Activated naive CD4-positive, alpha-beta T cell treated with anti-CD3 and anti-CD28 coated beads for 36 hours (primary cell): ENCODE measurements at regions of chr2 and their contacts with region 1.

Region 1: GRCh38 chr2:109128048-109128465 is 948 bp upstream of the SH3RF3 start:
- DNase-seq: peak; percentile 81
- H3K4me3 Mint-ChIP-seq: peak overlapping the region; percentile 76
- H3K27ac Mint-ChIP-seq: no peak overlapping the region
- H3K4me1 Mint-ChIP-seq: peaks cover 42% of the 10 kb centered on the region
- H3K27me3 Mint-ChIP-seq: peaks cover 6% of the 10 kb centered on the region

Region 2: DNA sequence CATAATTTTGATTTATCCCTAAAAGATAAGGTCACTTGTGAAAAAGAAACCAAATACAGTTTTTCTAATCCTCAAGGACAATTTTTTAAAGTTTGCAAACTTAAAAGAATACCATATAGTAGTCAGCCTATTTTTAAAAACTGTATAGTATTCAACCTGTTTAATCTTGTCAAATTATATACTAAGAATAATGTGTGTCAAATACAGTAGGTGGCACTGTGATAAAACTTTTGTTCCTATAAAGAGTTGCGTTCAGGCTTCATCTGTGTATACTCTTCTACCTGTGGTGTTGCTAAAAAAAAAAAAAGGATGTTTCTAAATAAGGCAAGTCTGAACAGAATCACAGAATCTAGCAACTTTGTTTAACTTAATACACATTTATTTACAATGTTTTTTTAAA is 272.9 kb before region 1 on chr2:
- CTCF ChIA-PET with region 1: no interaction called
- intact Hi-C with region 1: loop called (anchors 5 kb)
- DNase-seq: no peak
- H3K4me3 Mint-ChIP-seq: no peak overlapping the region
- H3K27ac Mint-ChIP-seq: no peak overlapping the region
- H3K4me1 Mint-ChIP-seq: peaks cover 2% of the 10 kb centered on the region
- H3K27me3 Mint-ChIP-seq: no peaks in the 10 kb centered on the region

Region 3: GRCh38 chr2:109031476-109032228 is 96.4 kb before region 1 on chr2:
- CTCF ChIA-PET with region 1: no interaction called
- intact Hi-C with region 1: loop called (anchors 2 kb)
- DNase-seq: peak; percentile 85
- H3K4me3 Mint-ChIP-seq: peak overlapping the region; percentile 81
- H3K27ac Mint-ChIP-seq: peak overlapping the region; percentile 91
- H3K4me1 Mint-ChIP-seq: peaks cover 65% of the 10 kb centered on the region
- H3K27me3 Mint-ChIP-seq: no peaks in the 10 kb centered on the region

Region 4: GRCh38 chr2:109208081-109208950 is 80.3 kb after region 1 on chr2:
- CTCF ChIA-PET with region 1: no interaction called
- intact Hi-C with region 1: loop called (anchors 1 kb)
- DNase-seq: no peak
- H3K4me3 Mint-ChIP-seq: no peak overlapping the region
- H3K27ac Mint-ChIP-seq: no peak overlapping the region
- H3K4me1 Mint-ChIP-seq: peaks cover 18% of the 10 kb centered on the region
- H3K27me3 Mint-ChIP-seq: peaks cover 36% of the 10 kb centered on the region

Region 5: DNA sequence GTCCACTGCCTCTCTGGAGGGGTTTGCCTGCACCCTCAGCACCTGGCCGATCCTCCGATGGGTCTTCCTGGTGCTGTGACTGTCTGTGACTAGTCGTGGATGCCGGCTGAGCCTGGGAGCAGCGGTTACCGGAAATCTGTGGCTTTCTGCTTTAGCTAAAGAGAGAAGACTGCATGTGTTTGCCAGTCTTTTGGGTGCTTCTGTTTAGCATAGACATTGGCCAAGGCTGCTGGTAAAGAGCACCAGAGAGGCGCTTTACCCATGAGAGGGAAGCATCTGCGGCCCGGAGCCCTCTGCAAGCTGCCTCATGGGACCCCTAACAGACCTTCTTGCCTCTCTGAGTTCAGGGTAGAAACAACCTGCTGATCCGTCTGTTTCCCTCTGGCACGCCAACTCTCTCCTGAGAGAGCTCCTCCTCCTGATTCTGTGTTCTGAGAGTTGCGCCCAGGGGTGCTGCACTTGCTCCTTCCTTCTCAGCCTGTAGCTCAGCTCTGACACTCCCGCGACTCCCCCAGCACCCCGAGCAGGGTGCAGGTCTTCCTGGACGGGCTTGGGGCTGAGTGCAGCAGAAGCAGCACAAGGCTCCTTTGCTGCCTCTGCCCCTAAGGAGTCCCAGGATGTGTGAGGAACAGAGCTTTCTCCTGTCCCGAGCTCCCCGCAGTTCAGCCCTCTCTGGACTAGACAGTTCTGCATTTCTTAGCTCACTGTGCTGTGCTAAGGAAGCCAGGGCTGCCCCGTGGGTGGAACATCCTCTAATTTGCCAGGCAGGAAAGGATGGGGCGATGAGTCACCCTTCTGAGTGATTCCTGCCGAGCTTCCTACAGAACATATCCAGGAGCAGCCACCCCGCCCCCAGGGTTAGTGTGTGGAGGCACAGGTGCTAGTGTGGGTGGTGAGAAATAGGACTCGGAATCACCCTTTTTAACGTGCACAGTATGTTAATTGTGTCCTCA is 204.1 kb after region 1 on chr2:
- CTCF ChIA-PET with region 1: interaction called, 3 read pairs
- intact Hi-C with region 1: loop called (anchors 5 kb)
- DNase-seq: peak; percentile 55
- H3K4me3 Mint-ChIP-seq: peak overlapping the region; percentile 59
- H3K27ac Mint-ChIP-seq: no peak overlapping the region
- H3K4me1 Mint-ChIP-seq: peaks cover 35% of the 10 kb centered on the region
- H3K27me3 Mint-ChIP-seq: no peaks in the 10 kb centered on the region

Region 6: GRCh38 chr2:109396202-109397180 is 268.4 kb after region 1 on chr2:
- CTCF ChIA-PET with region 1: interaction called, 3 read pairs
- intact Hi-C with region 1: loop called (anchors 5 kb)
- DNase-seq: peak; percentile 61
- H3K4me3 Mint-ChIP-seq: no peak overlapping the region
- H3K27ac Mint-ChIP-seq: peak overlapping the region; percentile 59
- H3K4me1 Mint-ChIP-seq: peaks cover 19% of the 10 kb centered on the region
- H3K27me3 Mint-ChIP-seq: no peaks in the 10 kb centered on the region

Region 7: DNA sequence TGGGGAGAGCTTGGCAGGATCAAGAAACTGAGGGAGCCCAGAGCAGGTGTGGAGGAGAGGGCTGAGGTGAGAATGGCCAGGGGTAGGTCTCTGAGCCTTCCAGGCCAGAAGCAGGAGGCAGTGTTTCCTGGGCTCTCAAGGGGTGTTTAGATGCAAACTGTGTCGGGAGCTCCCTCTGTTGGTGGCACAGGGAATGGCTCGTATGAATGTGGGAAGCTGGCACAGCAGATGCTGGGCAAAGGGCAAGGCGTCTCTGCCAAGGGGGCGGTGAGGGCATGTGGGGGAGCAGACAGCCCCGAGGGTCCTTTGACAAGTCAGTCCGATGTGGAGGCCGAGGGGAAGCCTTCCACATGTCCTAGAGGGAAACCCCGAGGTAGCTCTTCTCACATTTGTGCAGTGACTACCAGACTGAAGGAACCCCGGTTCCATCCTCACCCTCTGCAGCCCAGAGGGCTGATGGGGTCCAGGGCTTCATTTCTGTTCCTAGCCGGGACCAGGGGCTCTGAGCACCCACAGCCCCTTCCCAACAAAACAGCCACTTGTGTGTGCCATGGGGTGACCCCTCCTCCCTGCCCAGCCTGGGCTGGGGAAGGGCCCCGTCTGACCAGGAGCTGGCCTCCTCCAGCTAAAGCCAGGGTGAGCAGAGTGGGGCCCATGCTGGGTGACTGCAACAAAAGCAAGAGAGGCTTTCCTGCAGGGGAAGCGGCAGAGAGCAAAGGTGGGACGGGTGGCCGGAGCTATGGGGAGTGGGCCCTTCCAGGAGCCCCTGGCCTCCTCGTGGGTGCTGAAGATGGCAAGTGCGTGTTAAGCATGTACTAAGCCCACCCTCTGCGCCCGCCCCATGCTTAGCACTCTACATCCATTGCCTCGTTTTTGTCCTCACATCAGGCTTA is 382.3 kb after region 1 on chr2:
- CTCF ChIA-PET with region 1: interaction called, 57 read pairs
- intact Hi-C with region 1: loop called (anchors 1 kb)
- DNase-seq: peak; percentile 89
- H3K4me3 Mint-ChIP-seq: no peak overlapping the region
- H3K27ac Mint-ChIP-seq: no peak overlapping the region
- H3K4me1 Mint-ChIP-seq: peaks cover 3% of the 10 kb centered on the region
- H3K27me3 Mint-ChIP-seq: no peaks in the 10 kb centered on the region